Mammary epithelial cell (primary cell): ENCODE measurements at regions of chr5 and their contacts with region 1.

Region 1: DNA sequence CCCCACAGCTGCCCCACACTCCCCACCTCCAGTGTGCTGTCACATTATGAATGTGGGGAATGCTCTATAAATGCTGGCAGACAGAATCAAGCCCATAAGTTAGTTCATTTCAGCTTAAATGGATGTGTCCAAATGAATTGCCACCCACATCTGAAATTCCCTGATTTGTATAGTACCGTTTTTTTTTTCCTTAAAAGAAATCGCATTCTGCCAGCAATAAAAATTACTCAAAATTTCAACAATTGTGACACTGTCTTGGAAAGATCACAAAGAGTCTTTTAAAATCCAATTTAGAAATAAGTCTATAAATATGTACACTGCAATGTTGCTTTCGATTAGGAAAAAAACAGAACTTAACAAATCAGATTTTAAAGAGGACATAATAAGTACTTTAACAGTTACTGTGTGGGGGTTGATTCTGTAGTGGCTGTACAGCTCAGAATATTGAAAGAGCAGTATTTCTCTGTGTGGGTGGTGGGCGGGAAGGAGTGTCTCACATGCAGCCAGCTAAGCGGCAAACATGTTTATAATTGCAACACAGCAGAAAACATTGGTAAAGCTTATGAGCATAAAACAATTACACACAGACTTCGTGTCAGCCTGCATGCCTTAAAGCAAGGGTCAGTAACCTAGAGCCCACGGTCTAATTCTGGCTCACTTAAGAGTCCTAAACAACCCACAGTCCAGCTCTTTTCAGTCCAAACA is 24.9 kb upstream of the CSNK1G3 start:
- DNase-seq: peak; percentile 37
- H3K4me3 ChIP-seq: peak overlapping the region in 1 of 3 experiments; percentile 8
- H3K27ac ChIP-seq: no peak overlapping the region
- H3K4me1 ChIP-seq: peaks cover 13% of the 10 kb centered on the region
- H3K27me3 ChIP-seq: no peaks in the 10 kb centered on the region
- CTCF ChIP-seq: no peak

Region 2: GRCh38 chr5:123125953-123126734 is 361.0 kb before region 1 on chr5:
- CTCF ChIA-PET with region 1: no interaction called
- dilution Hi-C with region 1: no loop called
- in situ Hi-C with region 1: no loop called
- intact Hi-C with region 1: no loop called
- DNase-seq: no peak
- H3K4me3 ChIP-seq: no peak overlapping the region
- H3K27ac ChIP-seq: no peak overlapping the region
- H3K4me1 ChIP-seq: no peaks in the 10 kb centered on the region
- H3K27me3 ChIP-seq: peaks cover 2% of the 10 kb centered on the region
- CTCF ChIP-seq: no peak

Region 3: GRCh38 chr5:123448017-123448617 is 39.0 kb before region 1 on chr5:
- CTCF ChIA-PET with region 1: no interaction called
- dilution Hi-C with region 1: loop called (anchors 5 kb)
- in situ Hi-C with region 1: no loop called
- intact Hi-C with region 1: no loop called
- DNase-seq: no peak
- H3K4me3 ChIP-seq: no peak overlapping the region
- H3K27ac ChIP-seq: no peak overlapping the region
- H3K4me1 ChIP-seq: no peaks in the 10 kb centered on the region
- H3K27me3 ChIP-seq: no peaks in the 10 kb centered on the region
- CTCF ChIP-seq: no peak

Region 4: DNA sequence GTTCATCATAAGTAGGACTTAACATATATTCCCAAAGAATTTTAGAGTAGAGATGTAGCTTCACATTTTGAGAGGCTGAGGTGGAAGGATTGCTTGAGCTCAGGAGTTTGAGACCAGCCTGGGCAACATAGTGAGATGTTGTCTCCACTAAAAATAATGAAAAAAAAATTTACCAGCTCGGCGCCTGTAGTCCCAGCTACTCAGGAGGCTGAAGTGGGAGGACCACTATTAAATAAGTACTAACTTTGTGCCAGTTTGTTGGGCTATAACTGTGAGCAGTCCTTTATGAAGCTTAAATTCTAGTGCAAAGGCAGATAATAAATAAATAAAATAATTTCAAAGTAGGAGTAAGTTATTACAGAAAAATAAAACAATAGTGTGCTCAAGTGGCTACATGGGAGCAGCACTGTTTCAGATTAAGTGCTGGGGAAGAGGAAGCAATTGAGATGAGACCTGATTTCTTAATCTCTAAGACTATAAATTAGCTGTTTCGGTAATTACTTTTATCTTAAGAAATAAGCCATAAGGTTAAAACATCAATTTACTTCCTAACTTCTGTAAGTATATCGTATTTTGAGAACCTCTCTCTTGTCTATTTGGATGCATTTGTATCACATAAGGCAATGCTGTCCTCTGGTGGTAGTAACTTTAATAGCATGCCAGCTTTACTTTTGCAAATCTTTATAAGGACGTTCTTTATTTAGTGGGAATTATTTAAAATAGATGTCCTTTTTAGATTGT is 123.7 kb after region 1 on chr5:
- CTCF ChIA-PET with region 1: no interaction called
- dilution Hi-C with region 1: no loop called
- in situ Hi-C with region 1: no loop called
- intact Hi-C with region 1: no loop called
- DNase-seq: peak; percentile 42
- H3K4me3 ChIP-seq: no peak overlapping the region
- H3K27ac ChIP-seq: no peak overlapping the region
- H3K4me1 ChIP-seq: no peaks in the 10 kb centered on the region
- H3K27me3 ChIP-seq: no peaks in the 10 kb centered on the region
- CTCF ChIP-seq: peak; percentile 94 to 99

Region 5: GRCh38 chr5:123827811-123828210 is 340.7 kb after region 1 on chr5:
- CTCF ChIA-PET with region 1: no interaction called
- dilution Hi-C with region 1: no loop called
- in situ Hi-C with region 1: no loop called
- intact Hi-C with region 1: no loop called
- DNase-seq: peak; percentile 36
- H3K4me3 ChIP-seq: no peak overlapping the region
- H3K27ac ChIP-seq: no peak overlapping the region
- H3K4me1 ChIP-seq: no peaks in the 10 kb centered on the region
- H3K27me3 ChIP-seq: no peaks in the 10 kb centered on the region
- CTCF ChIP-seq: no peak